ENCODE measurements at regions of chr17 and their contacts with region 1.

Region 1: DNA sequence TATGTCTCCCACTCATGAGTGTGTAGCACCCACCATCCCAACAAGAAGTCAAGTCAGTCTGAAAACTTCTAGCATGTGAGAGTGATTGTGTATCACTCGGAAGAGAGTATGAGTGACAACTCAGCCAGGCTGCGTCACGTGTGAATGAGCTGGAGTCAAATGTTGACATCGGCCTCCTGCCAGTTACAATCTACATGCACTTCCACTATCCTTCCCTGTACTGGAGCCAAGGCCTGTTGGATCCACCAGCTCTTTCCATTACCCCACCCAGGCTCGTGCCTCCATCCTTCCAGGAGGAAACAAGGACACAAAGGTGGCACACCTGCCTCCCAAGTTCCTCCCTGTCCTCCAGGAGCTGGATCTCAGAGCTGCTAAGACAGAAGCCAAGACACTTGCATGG is 64.5 kb downstream of the ASIC2 start:
- DNase-seq: no peak
- ATAC-seq: no peak
- H3K4me3 ChIP-seq: no peak overlapping the region
- H3K27ac ChIP-seq: no peak overlapping the region
- H3K4me1 ChIP-seq: no peaks in the 10 kb centered on the region
- H3K27me3 ChIP-seq: no peaks in the 10 kb centered on the region

Region 2: GRCh38 chr17:33209671-33210070 is 18.9 kb before region 1 on chr17:
- intact Hi-C with region 1: loop called in 1 of 2 experiments (anchors 2 kb)
- DNase-seq: no peak
- ATAC-seq: no peak
- H3K4me3 ChIP-seq: no peak overlapping the region
- H3K27ac ChIP-seq: no peak overlapping the region
- H3K4me1 ChIP-seq: no peaks in the 10 kb centered on the region
- H3K27me3 ChIP-seq: no peaks in the 10 kb centered on the region

Measured in aorta (tissue), 5 donors.